Activated CD4-positive, alpha-beta T cell treated with anti-CD3 and anti-CD28 coated beads for 36 hours (primary cell): ENCODE measurements at regions of chr7 and their contacts with region 1.

Region 1: DNA sequence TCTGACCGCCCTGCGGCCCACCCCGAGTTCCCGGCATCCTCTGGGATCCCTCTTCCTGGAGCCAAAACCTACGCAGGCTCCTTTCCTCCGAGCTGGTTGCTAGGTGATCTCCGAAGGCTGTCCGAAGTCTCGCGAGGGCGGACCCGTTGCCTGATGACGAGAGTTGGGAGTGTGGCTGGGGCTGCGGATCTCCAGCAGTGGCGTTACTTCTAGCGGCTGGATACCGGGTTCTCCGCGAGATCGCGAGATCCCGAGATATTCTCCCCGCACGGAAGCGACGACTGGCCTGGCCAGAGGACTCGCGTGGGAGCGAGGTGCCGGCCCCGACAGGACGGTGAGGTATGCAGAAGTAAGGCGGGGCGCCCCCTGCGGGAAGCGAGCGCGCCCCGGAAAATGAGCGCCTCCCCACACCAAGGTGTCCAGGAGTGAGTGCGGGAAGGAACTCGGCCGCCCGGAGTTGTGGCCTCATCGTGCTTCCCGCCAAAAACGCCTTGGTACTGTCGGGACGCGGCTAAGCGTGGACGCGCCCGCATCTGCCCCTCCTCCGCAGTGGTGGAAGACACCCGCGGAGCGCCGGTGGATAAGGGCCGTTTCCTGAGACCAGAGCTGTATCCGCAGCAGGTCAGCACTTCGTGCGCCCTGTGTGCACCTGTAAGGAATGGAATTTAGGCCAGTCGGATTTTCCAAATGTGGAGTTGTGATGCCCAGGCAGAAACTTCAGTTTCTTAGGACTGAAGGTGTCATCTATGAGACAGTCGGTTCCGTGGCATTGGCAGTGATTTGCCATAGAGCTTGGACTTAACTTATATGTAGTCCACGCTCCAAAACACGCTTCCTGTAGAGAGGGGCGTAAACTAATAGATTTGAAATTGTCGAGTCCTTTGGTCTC is at the start of gene AGBL3:
- DNase-seq: peak; percentile 95
- ATAC-seq: peak; percentile 97
- H3K4me3 Mint-ChIP-seq: peak within 1 kb of the TSS; percentile 91
- H3K27ac Mint-ChIP-seq: peak within 1 kb of the TSS; percentile 95
- H3K4me1 Mint-ChIP-seq: peaks cover 36% of the 10 kb centered on the region
- H3K27me3 Mint-ChIP-seq: no peaks in the 10 kb centered on the region
- total RNA-seq, gene AGBL3: 2.1 to 2.2 TPM

Region 2: DNA sequence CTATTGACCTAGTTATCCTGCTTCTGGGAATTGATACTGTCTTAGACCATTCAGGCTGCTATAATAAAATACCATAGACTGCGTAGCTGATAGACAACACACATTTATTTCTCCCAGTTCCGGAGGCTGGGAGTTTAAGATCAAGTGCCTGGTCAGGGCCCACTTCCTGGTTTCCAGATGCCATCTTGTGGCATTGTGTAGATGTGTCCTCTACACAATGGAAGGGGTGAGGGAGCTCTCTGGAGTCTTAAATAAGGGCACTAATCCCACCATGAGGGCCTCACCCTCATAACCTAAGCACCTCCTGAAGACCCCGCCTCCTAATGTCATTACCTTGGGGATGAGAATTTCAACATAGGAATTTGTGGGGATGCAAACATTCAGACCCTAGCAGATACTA is 732.3 kb before region 1 on chr7:
- CTCF ChIA-PET with region 1: no interaction called
- POLR2A ChIA-PET with region 1: no interaction called
- intact Hi-C with region 1: no loop called
- DNase-seq: no peak
- ATAC-seq: no peak
- H3K4me3 Mint-ChIP-seq: no peak overlapping the region
- H3K27ac Mint-ChIP-seq: no peak overlapping the region
- H3K4me1 Mint-ChIP-seq: no peaks in the 10 kb centered on the region
- H3K27me3 Mint-ChIP-seq: peaks cover 5% of the 10 kb centered on the region

Region 3: DNA sequence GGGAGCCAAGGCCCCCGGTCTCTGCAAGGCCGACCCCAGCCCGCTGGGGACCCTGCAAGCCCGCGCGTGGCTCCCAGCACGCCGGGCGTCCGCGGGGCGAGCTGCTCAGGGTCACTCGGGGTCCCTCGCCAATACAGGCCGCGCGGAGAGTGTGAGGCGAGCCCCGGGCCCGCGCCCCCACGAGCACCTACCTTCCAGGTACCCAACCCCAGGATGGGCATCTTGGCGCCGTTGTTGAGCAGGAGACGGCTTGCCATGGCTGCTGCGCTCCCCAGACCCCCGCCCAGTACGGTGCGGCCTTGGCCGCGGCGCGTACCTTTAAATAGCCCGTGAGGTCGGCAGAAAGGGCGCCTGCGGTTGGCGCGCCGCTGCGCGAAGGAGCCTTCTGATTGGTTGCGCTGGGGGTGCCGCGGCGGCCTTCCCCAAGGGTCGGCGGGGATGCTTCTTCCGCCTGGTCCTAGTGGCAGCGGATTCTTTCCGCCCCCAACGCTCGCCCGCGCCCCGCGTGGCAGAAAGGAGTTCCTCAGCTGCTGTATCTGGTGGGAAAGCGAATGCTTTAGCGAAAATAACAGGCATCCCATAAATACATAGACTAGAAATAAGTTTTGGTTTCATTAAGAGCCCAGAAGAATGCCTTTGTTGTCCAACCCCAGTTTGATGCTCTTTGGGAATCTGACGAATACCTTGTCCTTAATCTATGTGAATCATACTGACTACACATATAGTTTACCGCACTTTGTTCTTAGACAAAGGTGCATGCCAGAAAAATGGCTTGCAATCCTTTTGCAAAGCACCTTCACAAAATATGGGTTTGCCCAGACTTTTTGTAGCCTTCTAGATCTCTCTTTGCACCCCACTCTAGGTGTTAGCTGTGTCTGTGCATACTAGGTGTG is 527.6 kb before region 1 on chr7 and contains the start of gene AKR1B1:
- CTCF ChIA-PET with region 1: no interaction called
- POLR2A ChIA-PET with region 1: no interaction called
- intact Hi-C with region 1: loop called in 1 of 2 experiments (anchors 2 kb)
- DNase-seq: peak; percentile 94
- ATAC-seq: peak; percentile 92
- H3K4me3 Mint-ChIP-seq: peak within 1 kb of the TSS; percentile 83
- H3K27ac Mint-ChIP-seq: peak within 1 kb of the TSS; percentile 76
- H3K4me1 Mint-ChIP-seq: peaks cover 51% of the 10 kb centered on the region
- H3K27me3 Mint-ChIP-seq: no peaks in the 10 kb centered on the region
- total RNA-seq, gene AKR1B1: 88.1 to 120 TPM

Region 4: GRCh38 chr7:135091717-135092116 is 105.1 kb after region 1 on chr7:
- CTCF ChIA-PET with region 1: no interaction called
- POLR2A ChIA-PET with region 1: no interaction called
- intact Hi-C with region 1: no loop called
- DNase-seq: no peak
- ATAC-seq: no peak
- H3K4me3 Mint-ChIP-seq: no peak overlapping the region
- H3K27ac Mint-ChIP-seq: no peak overlapping the region
- H3K4me1 Mint-ChIP-seq: no peaks in the 10 kb centered on the region
- H3K27me3 Mint-ChIP-seq: no peaks in the 10 kb centered on the region

Region 5: GRCh38 chr7:135147899-135148721 is 161.5 kb after region 1 on chr7 and contains the start of gene TMEM140:
- CTCF ChIA-PET with region 1: interaction called, 4 read pairs
- POLR2A ChIA-PET with region 1: interaction called, 3 read pairs
- intact Hi-C with region 1: loop called (anchors 1 to 5 kb)
- DNase-seq: peak; percentile 75
- ATAC-seq: peak; percentile 81
- H3K4me3 Mint-ChIP-seq: peak within 1 kb of the TSS; percentile 79
- H3K27ac Mint-ChIP-seq: peak within 1 kb of the TSS; percentile 92
- H3K4me1 Mint-ChIP-seq: peaks cover 52% of the 10 kb centered on the region
- H3K27me3 Mint-ChIP-seq: no peaks in the 10 kb centered on the region
- total RNA-seq, gene TMEM140: 10.8 to 12.1 TPM

Region 6: GRCh38 chr7:135160098-135160857 is 173.7 kb after region 1 on chr7:
- CTCF ChIA-PET with region 1: no interaction called
- POLR2A ChIA-PET with region 1: no interaction called
- intact Hi-C with region 1: no loop called
- DNase-seq: no peak
- ATAC-seq: peak; percentile 49
- H3K4me3 Mint-ChIP-seq: no peak overlapping the region
- H3K27ac Mint-ChIP-seq: peak overlapping the region; percentile 81
- H3K4me1 Mint-ChIP-seq: peaks cover 32% of the 10 kb centered on the region
- H3K27me3 Mint-ChIP-seq: no peaks in the 10 kb centered on the region

Region 7: DNA sequence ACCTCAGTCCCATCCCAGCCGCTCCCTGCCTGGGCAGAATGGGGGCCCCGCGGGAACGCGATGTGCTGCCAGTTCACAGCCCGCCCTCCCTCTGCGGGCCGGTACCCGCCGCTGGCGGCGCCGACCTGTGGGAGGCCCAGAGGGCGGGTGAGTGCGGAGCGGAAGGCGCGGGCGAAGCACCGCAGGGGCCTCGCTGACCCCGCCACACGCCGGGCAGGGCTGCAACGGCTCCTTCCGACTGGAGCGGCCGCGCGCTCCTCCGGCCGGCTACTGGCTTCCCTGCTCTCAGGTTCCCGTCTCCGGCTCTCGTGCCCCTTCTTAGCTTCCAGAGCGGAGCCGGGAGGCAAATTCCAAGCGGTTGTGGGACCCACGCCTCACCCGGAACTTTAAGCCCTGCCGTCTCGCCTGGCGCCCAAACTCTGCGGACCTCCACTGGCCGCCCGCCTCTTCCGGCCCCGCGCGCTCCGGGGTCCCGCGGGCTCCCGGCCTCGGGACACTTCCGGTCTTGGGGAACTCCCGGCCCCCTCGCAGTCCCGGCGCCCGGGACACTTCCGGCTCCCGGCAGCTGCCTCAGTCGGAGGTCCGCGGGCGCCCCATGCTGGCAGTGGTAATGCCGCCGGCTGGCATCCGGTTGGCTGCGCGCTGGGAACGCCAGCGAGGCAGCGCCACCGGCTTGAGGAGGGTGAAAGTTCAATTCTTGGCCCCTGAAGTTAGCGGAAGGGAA is 183.8 kb after region 1 on chr7 and contains the start of gene CYREN:
- CTCF ChIA-PET with region 1: interaction called, 38 read pairs
- POLR2A ChIA-PET with region 1: interaction called, 3 read pairs
- intact Hi-C with region 1: loop called (anchors 1 kb)
- DNase-seq: peak; percentile 97
- ATAC-seq: peak; percentile 85
- H3K4me3 Mint-ChIP-seq: peak within 1 kb of the TSS; percentile 88
- H3K27ac Mint-ChIP-seq: peak within 1 kb of the TSS; percentile 96
- H3K4me1 Mint-ChIP-seq: peaks cover 50% of the 10 kb centered on the region
- H3K27me3 Mint-ChIP-seq: no peaks in the 10 kb centered on the region
- total RNA-seq, gene CYREN: 32.6 to 40.5 TPM

Region 8: GRCh38 chr7:135385209-135385608 is 398.6 kb after region 1 on chr7:
- CTCF ChIA-PET with region 1: no interaction called
- POLR2A ChIA-PET with region 1: no interaction called
- intact Hi-C with region 1: no loop called
- DNase-seq: no peak
- ATAC-seq: no peak
- H3K4me3 Mint-ChIP-seq: no peak overlapping the region
- H3K27ac Mint-ChIP-seq: no peak overlapping the region
- H3K4me1 Mint-ChIP-seq: no peaks in the 10 kb centered on the region
- H3K27me3 Mint-ChIP-seq: no peaks in the 10 kb centered on the region